Dendritic cell treated with granulocyte-macrophage colony-stimulating factor and Interleukin-4, amounts not matched to agents 40 ng/mL and 50 ng/mL, for 4 days (primary cell): ENCODE measurements at regions of chr17 and their contacts with region 1.

Region 1: DNA sequence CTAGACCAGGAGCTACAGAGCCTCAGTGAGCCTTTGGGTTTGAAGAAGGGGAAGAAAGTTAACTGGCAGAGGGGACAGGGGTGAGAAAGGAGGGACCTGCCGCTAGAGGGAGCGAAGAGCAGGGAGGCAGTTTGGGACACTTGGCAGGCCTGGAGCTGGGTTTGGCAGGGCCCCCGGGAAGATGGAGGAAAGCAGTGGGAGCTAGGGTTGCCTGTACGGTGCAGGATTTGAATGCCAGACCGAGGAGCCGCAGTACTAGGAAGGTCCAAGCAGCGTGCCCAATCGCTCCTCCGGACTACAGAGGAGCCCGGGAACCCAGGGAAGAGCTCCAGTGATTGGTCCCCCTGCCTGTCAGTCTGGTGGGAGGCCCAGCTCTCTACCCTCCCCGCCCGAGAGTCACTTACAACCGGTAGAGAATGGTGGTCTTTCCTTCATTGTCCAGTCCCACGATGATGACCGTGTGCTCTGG is 1.3 kb downstream of the ARL5C start:
- H3K4me3 Mint-ChIP-seq: peak overlapping the region; percentile 80
- H3K27ac Mint-ChIP-seq: peak overlapping the region; percentile 45
- H3K4me1 Mint-ChIP-seq: peaks cover 64% of the 10 kb centered on the region
- H3K27me3 Mint-ChIP-seq: peaks cover 24% of the 10 kb centered on the region

Region 2: GRCh38 chr17:39002991-39003715 is 161.6 kb before region 1 on chr17:
- intact Hi-C with region 1: no loop called
- H3K4me3 Mint-ChIP-seq: peak overlapping the region; percentile 64
- H3K27ac Mint-ChIP-seq: peak overlapping the region; percentile 96
- H3K4me1 Mint-ChIP-seq: peaks cover 42% of the 10 kb centered on the region
- H3K27me3 Mint-ChIP-seq: peaks cover 7% of the 10 kb centered on the region

Region 3: DNA sequence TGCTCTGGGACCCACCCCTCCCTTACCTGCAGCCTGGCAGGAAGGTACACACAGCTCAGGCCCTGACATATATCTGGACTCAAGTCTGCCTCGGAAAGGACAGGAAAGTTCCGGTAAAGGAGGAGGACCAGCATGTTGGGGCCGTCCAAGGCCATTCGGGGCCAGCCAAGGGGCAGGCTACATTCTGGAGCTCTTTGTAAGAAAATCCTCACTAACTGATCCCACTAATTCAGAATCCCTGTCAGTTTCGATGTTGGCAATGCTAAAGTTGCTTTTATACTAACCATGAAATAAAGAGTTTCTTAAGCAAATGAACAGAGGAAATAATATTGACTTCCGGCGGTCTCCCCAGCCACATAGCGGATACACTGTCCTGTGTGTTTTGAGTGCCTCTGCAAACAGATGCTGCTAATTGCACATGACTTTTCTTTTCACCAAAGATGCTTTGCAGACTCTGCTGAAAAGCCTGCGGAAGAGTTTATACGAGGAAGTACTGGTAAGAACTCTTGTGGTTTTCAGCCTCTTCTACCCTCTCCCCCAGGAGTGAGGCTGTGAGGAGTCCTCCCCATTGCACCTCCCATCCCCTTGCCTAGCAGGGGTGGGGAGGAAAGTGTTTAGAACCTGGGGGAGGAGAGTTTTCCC is 68.1 kb before region 1 on chr17:
- intact Hi-C with region 1: no loop called
- H3K4me3 Mint-ChIP-seq: no peak overlapping the region
- H3K27ac Mint-ChIP-seq: peak overlapping the region; percentile 75
- H3K4me1 Mint-ChIP-seq: peaks cover 75% of the 10 kb centered on the region
- H3K27me3 Mint-ChIP-seq: peaks cover 43% of the 10 kb centered on the region

Region 4: GRCh38 chr17:39199820-39200069 is 35.0 kb after region 1 on chr17:
- intact Hi-C with region 1: loop called (anchors 5 kb)
- H3K4me3 Mint-ChIP-seq: peak overlapping the region; percentile 92
- H3K27ac Mint-ChIP-seq: peak overlapping the region; percentile 93
- H3K4me1 Mint-ChIP-seq: peaks cover 43% of the 10 kb centered on the region
- H3K27me3 Mint-ChIP-seq: peaks cover 2% of the 10 kb centered on the region